ENCODE measurements at regions of chr7 and their contacts with region 1.

Region 1: DNA sequence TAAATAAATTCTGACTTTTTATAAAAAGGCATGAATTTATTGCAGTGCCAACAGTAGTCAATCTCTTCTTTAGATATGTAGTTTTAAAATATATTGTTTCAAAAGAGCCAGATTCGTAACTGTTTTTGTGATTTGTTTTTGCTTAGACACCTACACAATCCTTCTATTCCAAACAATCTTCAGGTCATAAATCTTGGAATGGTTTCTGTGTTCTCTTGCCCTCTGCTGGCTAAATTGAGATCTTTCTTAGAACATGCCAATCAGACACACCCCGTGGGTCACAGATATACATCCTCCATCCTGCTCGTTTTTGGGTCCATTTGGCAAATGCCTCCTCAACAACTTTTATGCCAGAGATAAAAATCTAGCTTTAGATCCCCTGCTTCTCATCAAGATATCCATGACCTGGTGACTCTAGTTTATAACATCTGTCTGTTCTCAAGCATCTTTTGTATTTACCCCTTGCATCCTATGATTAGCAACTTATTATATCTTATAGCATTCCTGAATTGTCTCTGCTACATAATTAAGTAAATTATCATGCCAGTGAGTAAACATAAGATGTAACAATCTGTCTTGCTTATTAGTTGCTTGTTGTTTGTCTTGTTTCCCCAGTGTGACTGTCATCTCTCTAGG is 35.3 kb upstream of the IFRD1 start:
- DNase-seq: no peak
- ATAC-seq: peak in 1 of 2 donors; percentile 67

Region 2: GRCh38 chr7:111752022-111752582 is 662.9 kb before region 1 on chr7:
- intact Hi-C with region 1: loop called in 1 of 2 experiments (anchors 5 kb)
- DNase-seq: peak; percentile 42
- ATAC-seq: peak in 1 of 2 donors; percentile 42

Region 3: GRCh38 chr7:111953611-111954010 is 461.4 kb before region 1 on chr7:
- intact Hi-C with region 1: loop called in 1 of 2 experiments (anchors 2 kb)
- DNase-seq: no peak
- ATAC-seq: peak; percentile 79 to 94

Region 4: GRCh38 chr7:112060625-112061024 is 354.3 kb before region 1 on chr7:
- intact Hi-C with region 1: loop called in 1 of 2 experiments (anchors 5 kb)
- DNase-seq: no peak
- ATAC-seq: no peak

Region 5: GRCh38 chr7:112495810-112496462 is 81.0 kb after region 1 on chr7:
- intact Hi-C with region 1: loop called in 1 of 2 experiments (anchors 10 kb)
- DNase-seq: peak; percentile 41
- ATAC-seq: peak; percentile 84 to 85

Measured in left cardiac atrium (tissue), 4 donors.